Spleen (tissue), 13 donors: ENCODE measurements at regions of chr6 and their contacts with region 1.

Region 1: DNA sequence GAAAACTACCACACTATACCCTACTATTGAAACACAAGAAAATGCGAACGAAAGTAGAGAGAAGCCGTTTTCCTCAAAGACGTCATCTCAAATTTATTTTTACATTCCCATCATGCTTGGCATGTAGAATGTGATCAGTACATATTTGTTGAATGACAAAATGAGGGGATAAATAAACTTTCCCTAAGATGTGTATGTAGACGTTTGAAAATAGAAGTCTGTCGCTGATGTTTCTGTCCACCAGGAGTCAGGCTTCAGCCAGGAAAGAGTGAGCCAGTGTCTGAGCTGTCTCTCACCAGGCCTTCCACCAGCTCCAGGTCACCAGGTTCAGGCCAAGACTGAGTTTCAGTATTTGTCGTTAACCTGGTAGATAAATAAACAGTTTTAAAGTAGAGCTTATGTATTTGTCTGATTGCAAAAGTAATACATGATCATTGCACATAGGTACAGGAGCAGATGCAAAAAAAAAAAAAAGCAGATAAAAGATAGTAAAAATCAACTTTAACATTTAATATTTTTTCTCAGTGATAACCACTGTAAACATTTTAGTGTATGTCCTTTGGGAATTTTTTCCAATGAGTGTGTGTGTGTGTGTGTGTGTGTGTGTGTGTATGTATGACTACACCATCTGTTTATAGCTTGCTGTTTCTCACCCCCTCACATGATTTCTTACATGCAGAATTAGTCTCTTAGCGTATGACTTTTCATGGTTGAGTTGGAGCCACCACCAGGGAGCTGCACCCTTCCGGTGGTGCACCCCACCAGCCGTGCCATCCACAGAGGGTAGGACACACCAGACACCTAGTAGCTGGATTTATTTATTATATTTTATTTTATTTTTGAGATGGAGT is 26.2 kb downstream of the WRNIP1 start:
- DNase-seq: no peak
- H3K4me3 ChIP-seq: no peak overlapping the region
- H3K27ac ChIP-seq: peak overlapping the region in 7 of 8 donors; percentile 67 to 90 (median 88)
- H3K4me1 ChIP-seq: peaks cover 0 to 58% (median 34%) of the 10 kb centered on the region in 6 donors
- H3K27me3 ChIP-seq: no peaks in the 10 kb centered on the region
- CTCF ChIP-seq: peak; percentile 49 to 87 (median 69)
- POLR2A ChIP-seq: no peak

Region 2: DNA sequence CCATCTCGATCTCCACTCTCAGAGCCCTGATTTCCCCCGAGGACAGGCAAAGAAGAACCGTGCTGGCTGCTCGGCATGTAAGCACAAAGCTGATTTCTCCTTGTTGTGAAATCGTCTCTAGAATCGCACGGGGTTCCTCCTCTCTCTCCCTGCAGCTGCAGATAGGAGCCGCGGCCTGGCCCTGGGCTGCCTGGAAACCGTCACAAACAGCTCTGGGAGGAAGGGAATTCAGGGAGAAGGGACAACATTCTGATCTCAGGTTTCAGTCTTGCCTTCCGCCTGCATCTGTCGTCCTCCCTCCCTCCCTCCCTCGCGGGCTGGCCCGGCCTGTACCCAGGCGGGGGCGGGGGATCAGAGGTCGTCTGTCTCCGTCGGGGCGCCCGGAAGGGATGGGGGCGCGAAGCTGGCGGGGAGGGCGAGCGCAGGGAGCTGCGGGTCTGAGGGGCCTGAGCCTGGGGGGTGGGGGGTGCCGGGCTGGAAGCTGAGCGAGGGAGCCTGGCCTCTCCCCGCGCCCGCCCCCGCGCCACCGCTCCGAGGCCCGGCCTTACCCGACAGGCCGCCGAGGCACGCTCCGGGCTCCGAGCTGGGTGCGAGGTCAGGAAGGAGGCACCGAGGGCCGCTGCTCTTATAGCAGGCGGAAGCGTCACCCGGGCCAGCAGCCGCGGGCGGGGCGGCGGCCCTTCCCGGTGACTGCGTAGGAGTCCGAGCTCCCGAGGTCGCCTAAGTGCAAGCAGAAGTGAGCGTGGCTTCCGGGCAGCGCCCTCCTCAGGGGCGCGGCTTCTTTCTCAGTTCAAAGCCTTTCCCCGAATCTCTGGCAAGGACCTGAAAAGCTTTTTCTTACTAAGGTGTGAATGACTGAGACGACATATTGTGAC is 50.2 kb after region 1 on chr6 and contains the start of gene SERPINB1:
- intact Hi-C with region 1: loop called (anchors 10 kb)
- DNase-seq: peak; percentile 99
- H3K4me3 ChIP-seq: peak within 1 kb of the TSS; percentile 49 to 84 (median 55)
- H3K27ac ChIP-seq: peak within 1 kb of the TSS; percentile 94 to 99 (median 97)
- H3K4me1 ChIP-seq: peaks cover 26 to 88% (median 70%) of the 10 kb centered on the region in 6 donors
- H3K27me3 ChIP-seq: no peaks in the 10 kb centered on the region
- CTCF ChIP-seq: peak in 4 of 11 experiments; percentile 12 to 44 (median 34)
- POLR2A ChIP-seq: peak; percentile 57 to 78 (median 72)
- total RNA-seq, gene SERPINB1: 71.2 to 194 (median 106) TPM

Region 3: DNA sequence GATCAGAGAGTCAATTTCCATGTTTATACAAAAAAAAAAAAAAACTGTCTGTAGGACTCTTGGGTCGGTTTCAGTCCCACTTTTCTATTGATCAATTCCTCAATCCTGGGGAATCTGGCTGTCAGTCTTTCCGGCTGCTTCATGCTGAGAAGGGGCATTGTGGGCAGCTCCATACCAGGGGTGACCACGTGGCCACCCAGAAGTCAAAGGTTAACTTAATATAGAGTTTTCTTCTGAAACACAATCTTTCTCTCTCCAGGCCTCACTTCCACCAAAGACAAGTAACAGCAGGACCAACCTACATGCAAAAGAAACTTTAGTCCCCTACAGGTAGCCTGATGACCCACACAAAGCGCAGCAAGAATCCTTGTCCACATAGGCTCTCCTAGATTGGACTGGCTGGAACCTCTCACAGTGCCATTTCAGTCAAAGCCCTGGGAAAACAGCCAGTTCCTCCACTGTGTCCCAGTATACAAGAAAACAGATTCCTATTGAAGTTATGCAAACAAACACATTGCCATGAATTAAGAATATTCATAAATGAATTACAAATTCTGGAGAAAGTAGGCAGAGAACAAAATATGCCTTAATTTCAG is 130.3 kb after region 1 on chr6:
- intact Hi-C with region 1: loop called (anchors 10 kb)
- DNase-seq: no peak
- H3K4me3 ChIP-seq: no peak overlapping the region
- H3K27ac ChIP-seq: no peak overlapping the region
- H3K4me1 ChIP-seq: peaks cover 4 to 23% (median 11%) of the 10 kb centered on the region in 6 donors
- H3K27me3 ChIP-seq: no peaks in the 10 kb centered on the region
- CTCF ChIP-seq: no peak
- POLR2A ChIP-seq: no peak